ENCODE measurements at regions of chr13 and their contacts with region 1.

Region 1: DNA sequence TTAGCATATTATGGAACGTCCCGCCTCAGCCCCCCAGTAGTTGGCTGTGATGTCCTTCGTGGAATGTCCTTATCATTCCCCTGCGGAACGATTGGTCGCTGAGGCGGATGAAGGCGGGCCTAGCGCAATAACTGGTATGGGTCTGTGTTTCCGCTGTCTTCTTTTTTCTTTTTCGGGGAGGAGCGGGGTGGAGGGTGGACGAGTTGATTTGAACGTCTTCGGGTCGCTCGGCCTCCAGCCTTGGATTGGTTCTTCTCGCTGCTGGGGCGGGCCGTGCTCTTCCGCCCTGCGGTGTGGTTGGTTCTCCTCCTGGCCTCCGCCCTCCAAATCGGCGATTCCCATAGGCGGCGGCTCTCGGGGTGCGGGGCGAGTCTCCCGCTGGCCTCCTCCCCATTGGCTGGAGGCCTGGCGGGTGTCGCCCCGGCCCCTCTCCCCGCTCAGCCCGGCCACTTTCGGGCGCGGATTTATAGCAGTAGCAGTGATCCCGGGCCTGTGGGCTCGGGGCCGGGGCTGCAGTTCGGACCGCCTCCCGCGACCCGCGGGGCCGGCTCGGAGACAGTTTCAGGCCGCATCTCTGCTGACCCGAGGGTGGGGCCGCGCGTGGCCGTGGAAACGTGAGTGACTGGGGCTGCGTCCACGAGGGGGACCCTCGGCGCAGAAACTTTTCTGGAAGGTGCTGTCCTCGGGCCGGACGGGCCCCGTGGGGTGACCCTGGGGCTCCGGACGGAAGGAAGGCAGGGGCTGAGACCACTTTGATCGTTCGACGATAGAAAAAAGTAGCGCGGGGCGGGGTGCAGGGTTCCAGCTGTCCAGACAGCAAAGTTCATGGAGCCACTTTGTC is 2.1 kb downstream of the ING1 start:
- DNase-seq: peak; percentile 97 to 100
- H3K4me3 ChIP-seq: peak overlapping the region; percentile 92 to 98
- H3K27ac ChIP-seq: peak overlapping the region; percentile 99
- H3K4me1 ChIP-seq: peaks cover 3 to 6% of the 10 kb centered on the region in 2 donors
- H3K27me3 ChIP-seq: no peaks in the 10 kb centered on the region
- CTCF ChIP-seq: peak in 3 of 4 experiments; percentile 18 to 49 (median 36)
- POLR2A ChIP-seq: peak; percentile 84 to 91

Region 2: GRCh38 chr13:110819203-110820014 is 103.8 kb after region 1 on chr13:
- intact Hi-C with region 1: loop called (anchors 5 kb)
- DNase-seq: peak; percentile 72 to 81
- H3K4me3 ChIP-seq: no peak overlapping the region
- H3K27ac ChIP-seq: no peak overlapping the region
- H3K4me1 ChIP-seq: peaks cover 0 to 4% of the 10 kb centered on the region in 2 donors
- H3K27me3 ChIP-seq: no peaks in the 10 kb centered on the region
- CTCF ChIP-seq: peak; percentile 92 to 96 (median 94)
- POLR2A ChIP-seq: no peak

Region 3: DNA sequence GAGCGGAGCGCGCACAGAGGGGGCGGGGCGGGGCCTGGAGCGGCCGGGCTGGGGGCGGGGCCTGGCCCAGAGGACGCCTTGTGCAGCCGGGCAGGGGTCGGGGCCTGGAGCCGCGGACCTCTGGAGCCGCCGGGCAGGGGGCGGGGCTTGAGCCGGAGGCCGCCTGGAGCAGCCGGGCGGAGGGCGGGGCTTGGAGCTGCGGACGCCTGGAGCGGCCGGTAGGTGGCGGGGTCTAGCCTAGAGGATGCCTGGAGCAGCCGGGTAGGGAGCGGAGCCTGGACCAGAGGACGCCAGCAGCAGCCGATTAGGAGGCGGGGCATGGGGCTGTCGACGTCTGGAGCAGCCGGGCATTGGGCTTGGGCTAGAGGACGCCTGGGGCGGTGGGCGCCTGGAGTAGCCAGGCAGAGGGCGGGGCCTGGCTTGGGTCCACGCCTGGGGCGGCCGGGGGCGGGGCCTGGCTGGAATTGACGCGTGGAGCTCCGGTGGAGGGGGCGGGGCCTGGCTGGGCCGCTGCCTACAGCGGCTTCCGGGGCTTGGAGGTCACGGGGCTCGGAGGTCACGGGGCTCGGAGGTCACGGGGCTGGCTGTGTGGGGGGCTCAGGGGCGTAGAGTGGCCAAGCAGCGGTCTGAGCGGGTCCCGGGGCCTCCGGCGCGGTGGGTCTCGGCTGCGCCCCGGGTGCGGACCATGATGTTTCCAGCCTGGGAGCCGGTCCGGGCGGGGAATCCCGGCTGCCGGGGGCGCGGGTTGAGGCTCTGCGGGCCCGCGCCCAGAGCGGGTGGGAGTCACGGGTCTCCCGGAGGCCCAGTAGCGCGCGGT is 199.7 kb after region 1 on chr13 and contains the start of gene ANKRD10:
- intact Hi-C with region 1: loop called (anchors 10 kb)
- DNase-seq: peak; percentile 99 to 100
- H3K4me3 ChIP-seq: peak within 1 kb of the TSS; percentile 86 to 100
- H3K27ac ChIP-seq: peak within 1 kb of the TSS; percentile 99 to 100
- H3K4me1 ChIP-seq: peaks cover 3 to 4% of the 10 kb centered on the region in 2 donors
- H3K27me3 ChIP-seq: no peaks in the 10 kb centered on the region
- CTCF ChIP-seq: peak; percentile 86 to 94 (median 92)
- POLR2A ChIP-seq: peak in 1 of 2 donors; percentile 64
- total RNA-seq, gene ANKRD10: 128 to 268 (median 235) TPM